ENCODE measurements at regions of chr10 and their contacts with region 1.

Region 1: DNA sequence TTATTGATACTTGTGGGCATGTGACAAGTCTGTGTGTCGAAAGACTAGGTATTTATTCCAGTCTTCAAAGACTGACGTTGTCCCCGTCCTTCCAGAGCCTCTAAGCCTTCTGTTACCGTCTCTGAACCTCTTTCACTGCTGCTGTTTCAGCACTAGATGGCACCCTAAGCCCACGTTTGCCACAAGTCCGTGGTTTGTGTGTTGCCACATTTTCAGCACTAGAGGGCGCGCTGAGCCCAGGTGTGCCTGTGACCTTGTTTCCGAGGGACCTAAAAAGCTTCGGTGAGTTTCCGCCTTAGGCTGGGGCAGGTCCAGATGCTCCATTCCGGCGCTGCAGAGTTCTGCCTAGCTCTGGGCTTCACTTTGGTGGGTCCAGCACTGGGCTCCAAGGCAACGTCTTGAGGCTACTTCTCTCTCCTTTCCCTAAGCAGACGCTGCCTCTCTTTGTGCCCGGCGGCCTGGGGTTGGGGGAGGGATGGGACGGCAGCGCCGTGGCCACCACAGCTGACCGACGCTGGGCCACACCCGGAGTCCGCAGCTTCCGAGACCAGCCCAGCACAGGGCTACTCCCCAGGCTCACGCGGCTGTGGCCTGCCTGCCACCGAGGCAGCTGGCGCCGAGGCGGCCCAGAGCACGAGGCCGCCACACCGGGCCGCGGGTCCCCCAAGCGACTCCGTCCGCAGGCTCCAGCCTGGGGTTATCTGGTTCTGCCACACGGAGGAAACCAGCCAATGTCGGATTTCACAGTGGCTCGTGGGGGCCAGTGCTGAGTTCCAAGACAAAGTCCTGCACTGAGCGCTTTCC is 520.2 kb downstream of the REEP3 start:
- DNase-seq: peak; percentile 77
- H3K4me3 ChIP-seq: no peak overlapping the region
- H3K27ac ChIP-seq: no peak overlapping the region
- H3K4me1 ChIP-seq: no peaks in the 10 kb centered on the region
- H3K27me3 ChIP-seq: peaks cover 14% of the 10 kb centered on the region
- CTCF ChIP-seq: peak; percentile 100

Region 2: DNA sequence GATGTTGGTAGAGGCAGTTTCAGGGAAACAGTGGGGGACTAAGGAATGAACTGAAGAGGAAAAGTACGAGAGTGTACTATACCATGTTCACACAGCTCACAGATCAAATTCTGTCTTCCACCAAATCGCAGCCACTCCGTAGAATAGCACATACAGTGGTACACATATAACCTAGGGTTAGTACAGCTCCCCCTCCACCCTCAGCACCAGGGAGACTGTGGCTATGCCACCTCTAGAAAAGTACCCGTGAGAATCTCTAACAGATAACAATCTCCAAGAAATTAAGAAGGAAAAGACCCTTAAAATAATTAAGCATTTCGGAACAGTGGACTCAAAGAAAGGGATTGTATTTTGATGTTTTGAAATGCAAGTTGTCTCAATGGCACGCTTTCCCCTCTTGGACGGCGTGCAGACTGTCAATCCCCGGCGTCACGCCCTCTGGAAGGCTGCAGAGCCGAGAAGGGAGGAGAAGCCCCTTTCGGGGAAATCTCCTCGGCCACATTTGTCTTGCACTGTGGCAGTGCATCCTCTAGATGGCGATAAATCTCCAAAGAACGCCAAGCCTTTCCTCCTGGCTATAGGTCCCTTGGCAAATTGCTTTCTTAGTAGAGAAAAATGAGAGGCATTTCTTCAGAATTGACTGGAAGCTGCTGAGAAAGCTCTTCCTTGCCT is 175.2 kb before region 1 on chr10:
- CTCF ChIA-PET with region 1: interaction called, 4 read pairs
- POLR2A ChIA-PET with region 1: no interaction called
- intact Hi-C with region 1: loop called (anchors 5 kb)
- DNase-seq: peak; percentile 89
- H3K4me3 ChIP-seq: peak overlapping the region; percentile 18
- H3K27ac ChIP-seq: no peak overlapping the region
- H3K4me1 ChIP-seq: peaks cover 5% of the 10 kb centered on the region
- H3K27me3 ChIP-seq: peaks cover 10% of the 10 kb centered on the region
- CTCF ChIP-seq: peak; percentile 87

Region 3: DNA sequence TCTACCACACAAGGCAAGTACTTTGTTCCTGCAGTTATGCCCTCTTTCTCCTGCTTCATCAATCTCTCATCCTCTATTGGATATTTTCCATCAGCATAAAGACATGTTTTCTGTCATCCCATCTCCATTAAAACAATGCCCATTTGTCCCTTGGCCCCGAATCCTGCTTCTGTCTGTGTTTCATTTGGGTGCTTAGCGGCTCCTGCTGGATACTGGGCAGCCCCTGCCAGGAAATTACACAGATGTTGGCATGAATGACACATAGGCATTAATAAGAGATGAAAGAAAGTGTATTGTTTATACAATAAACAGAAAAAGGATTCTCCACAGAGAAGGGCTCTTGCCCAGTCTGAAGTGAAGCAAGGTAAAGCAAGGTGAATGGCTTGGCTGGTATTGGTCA is 245.1 kb after region 1 on chr10:
- CTCF ChIA-PET with region 1: no interaction called
- POLR2A ChIA-PET with region 1: no interaction called
- intact Hi-C with region 1: loop called (anchors 10 kb)
- DNase-seq: no peak
- H3K4me3 ChIP-seq: no peak overlapping the region
- H3K27ac ChIP-seq: no peak overlapping the region
- H3K4me1 ChIP-seq: no peaks in the 10 kb centered on the region
- H3K27me3 ChIP-seq: no peaks in the 10 kb centered on the region
- CTCF ChIP-seq: no peak